ENCODE measurements at regions of chr22 and their contacts with region 1.

Region 1: GRCh38 chr22:22753526-22754267 is 109.3 kb downstream of the GGTLC2 start:
- DNase-seq: no peak
- ATAC-seq: peak; percentile 98
- H3K4me3 ChIP-seq: no peak overlapping the region
- H3K27ac ChIP-seq: no peak overlapping the region
- H3K4me1 ChIP-seq: no peaks in the 10 kb centered on the region
- H3K27me3 ChIP-seq: no peaks in the 10 kb centered on the region
- CTCF ChIP-seq: peak; percentile 38 to 76 (median 67); a peak in 5 of 6 replicates
- EP300 ChIP-seq: no peak
- POLR2A ChIP-seq: no peak
- RAD21 ChIP-seq: no peak

Region 2: DNA sequence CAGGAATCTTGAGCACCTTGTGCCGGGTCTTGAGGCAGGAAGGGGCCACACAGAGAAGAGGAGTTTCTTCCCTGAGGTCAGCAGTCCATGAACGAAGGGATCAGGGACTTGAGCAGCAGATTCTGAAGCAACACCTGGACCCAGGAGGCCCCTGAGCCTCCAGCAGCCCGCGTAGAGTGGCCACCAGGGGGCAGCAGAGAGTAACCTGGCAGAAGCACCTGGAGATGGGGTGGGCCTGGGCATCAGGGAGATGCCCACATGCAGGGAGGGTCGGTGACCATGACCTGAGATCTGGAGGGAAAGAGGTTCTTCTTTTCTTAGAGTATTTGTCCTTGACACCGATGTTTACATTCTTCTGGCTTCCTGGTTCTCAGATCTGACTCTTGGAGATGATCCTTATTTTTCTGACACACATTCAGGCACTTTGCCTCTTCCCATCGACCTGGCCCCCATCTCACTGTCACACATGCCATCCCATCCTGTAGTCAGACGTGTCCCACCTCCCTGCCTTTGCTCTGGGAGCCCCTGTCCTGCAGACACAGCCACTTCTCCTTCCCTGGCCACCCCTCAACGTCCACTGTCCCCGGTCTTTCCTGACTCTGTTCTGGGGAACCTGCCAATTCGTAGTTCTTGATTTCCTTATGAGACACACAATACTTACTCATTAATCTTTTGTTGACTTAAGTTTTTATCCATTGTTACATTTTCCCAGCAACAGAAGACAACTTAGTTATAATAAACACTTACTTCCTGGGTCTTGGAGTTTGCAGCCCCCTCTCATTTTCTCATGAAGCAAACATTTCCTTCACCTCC is 42.8 kb before region 1 on chr22:
- CTCF ChIA-PET with region 1: interaction called, 25 read pairs
- POLR2A ChIA-PET with region 1: no interaction called
- RAD21 ChIA-PET with region 1: interaction called, 12 read pairs
- SMC1A ChIA-PET with region 1: no interaction called
- in situ Hi-C with region 1: loop called (anchors 5 kb)
- intact Hi-C with region 1: loop called (anchors 5 kb)
- DNase-seq: no peak
- ATAC-seq: peak; percentile 70
- H3K4me3 ChIP-seq: no peak overlapping the region
- H3K27ac ChIP-seq: no peak overlapping the region
- H3K4me1 ChIP-seq: peaks cover 12% of the 10 kb centered on the region; the same call in 1 of the 2 replicates
- H3K27me3 ChIP-seq: no peaks in the 10 kb centered on the region
- CTCF ChIP-seq: peak; percentile 56 to 87 (median 64)
- EP300 ChIP-seq: no peak
- POLR2A ChIP-seq: no peak
- RAD21 ChIP-seq: no peak

Region 3: GRCh38 chr22:22764085-22764484 is 10.4 kb after region 1 on chr22:
- CTCF ChIA-PET with region 1: interaction called, 55 read pairs
- POLR2A ChIA-PET with region 1: no interaction called
- RAD21 ChIA-PET with region 1: interaction called, 4 read pairs
- SMC1A ChIA-PET with region 1: interaction called, 9 read pairs
- in situ Hi-C with region 1: no loop called
- intact Hi-C with region 1: no loop called
- DNase-seq: no peak
- ATAC-seq: no peak
- H3K4me3 ChIP-seq: no peak overlapping the region
- H3K27ac ChIP-seq: no peak overlapping the region
- H3K4me1 ChIP-seq: no peaks in the 10 kb centered on the region
- H3K27me3 ChIP-seq: no peaks in the 10 kb centered on the region
- CTCF ChIP-seq: no peak
- EP300 ChIP-seq: no peak
- POLR2A ChIP-seq: no peak
- RAD21 ChIP-seq: no peak

Region 4: GRCh38 chr22:22787786-22788459 is 34.2 kb after region 1 on chr22:
- CTCF ChIA-PET with region 1: interaction called, 15 read pairs
- POLR2A ChIA-PET with region 1: no interaction called
- RAD21 ChIA-PET with region 1: interaction called, 5 read pairs
- SMC1A ChIA-PET with region 1: interaction called, 7 read pairs
- in situ Hi-C with region 1: no loop called
- intact Hi-C with region 1: no loop called
- DNase-seq: no peak
- ATAC-seq: peak; percentile 92
- H3K4me3 ChIP-seq: no peak overlapping the region
- H3K27ac ChIP-seq: no peak overlapping the region
- H3K4me1 ChIP-seq: no peaks in the 10 kb centered on the region
- H3K27me3 ChIP-seq: no peaks in the 10 kb centered on the region
- CTCF ChIP-seq: peak; percentile 49 to 79 (median 59)
- EP300 ChIP-seq: no peak
- POLR2A ChIP-seq: no peak
- RAD21 ChIP-seq: no peak